K562 (cell line): ENCODE measurements at regions of chr1 and their contacts with region 1.

Region 1: DNA sequence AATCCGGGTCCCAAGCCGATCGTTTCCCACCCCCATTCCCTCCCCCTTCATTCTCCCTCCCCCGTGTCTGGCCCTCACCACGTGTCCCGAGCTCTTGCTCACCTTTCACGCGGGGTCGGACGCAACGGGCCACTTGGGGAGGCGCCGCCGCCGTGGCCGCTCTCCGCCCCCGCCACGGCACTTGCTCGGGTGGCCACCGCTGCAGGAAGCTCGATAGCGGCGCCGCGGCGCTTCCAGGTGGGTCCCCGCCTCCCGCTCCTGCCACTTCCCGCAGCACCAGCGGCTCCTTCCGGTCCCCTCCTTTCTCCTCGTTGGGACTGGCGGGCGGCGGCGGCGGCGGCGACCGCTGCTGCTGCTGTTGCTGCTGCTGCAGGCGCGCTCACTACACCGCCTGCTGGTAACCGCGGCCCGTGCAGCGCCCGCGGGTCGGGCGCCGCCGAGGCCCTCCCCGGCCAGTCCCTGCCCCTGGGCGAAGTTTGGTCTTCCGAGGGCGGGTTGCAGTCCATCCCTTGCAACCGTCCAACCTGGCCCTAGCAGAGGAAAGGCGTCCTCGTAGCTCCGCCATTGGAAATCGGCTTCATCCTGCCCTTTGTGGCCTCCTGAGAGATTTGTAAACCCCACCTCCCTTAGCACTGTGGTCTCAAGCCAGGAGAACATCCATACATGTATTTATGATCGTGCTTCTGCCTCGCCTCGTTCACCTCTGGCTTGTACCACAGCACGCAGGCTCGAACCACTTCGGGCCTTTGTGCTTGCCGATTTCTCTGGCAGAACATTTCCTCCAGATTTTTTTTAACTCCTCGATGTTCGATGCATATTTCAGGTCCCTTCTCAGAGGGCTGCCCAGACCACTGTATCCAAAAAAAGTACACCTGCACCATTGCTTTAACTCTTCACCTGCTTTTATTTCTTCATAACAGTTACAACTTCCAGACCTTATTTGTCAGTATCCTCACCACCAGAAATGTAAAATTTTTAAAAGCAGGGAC is 996 bp upstream of the ZZZ3 start:
- DNase-seq: peak; percentile 88 to 94 (median 90)
- ATAC-seq: peak; percentile 80
- H3K4me3 ChIP-seq: peak overlapping the region; percentile 66
- H3K27ac ChIP-seq: peak overlapping the region; percentile 96
- H3K4me1 ChIP-seq: peaks cover 5 to 7% of the 10 kb centered on the region in 2 experiments
- H3K27me3 ChIP-seq: no peaks in the 10 kb centered on the region
- CTCF ChIP-seq: peak; percentile 83 to 94 (median 85)
- EP300 ChIP-seq: no peak; the same call in 1 of the 2 replicates
- POLR2A ChIP-seq: peak; percentile 83
- RAD21 ChIP-seq: peak; percentile 76 to 80

Region 2: DNA sequence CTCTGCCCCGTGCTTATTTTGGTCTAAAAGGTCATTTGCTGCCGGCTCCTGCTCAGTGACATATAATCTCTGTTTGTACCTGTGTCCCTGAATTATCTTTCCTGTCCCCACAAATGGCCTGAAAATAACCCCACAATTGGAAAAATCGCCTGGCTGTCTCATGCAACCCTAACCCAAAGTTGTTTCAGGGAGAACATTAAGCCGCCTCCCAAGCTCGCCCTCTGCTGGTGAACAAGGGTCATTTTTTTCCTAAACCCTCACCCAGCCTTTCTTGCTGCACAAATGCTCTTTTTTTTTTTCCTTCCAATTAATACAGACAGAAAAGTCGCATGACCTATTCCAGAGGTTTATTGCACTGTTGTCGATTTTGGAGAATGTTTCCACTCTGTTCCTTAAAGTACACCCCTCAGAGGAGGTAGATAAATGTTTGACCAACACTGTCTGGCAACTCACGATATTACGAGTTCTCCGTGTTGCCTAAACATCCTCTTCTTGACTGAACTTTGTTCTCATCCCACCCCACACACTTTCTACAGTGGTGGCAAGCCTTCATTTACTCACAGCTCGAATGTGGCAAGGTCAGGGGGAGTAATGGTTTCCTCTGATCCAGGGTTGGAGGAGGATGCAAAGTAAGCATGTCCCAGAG is 149.7 kb before region 1 on chr1:
- CTCF ChIA-PET with region 1: no interaction called
- POLR2A ChIA-PET with region 1: no interaction called
- in situ Hi-C with region 1: no loop called
- intact Hi-C with region 1: loop called (anchors 5 kb)
- DNase-seq: peak; percentile 68 to 77 (median 73)
- ATAC-seq: peak; percentile 86
- H3K4me3 ChIP-seq: no peak overlapping the region
- H3K27ac ChIP-seq: no peak overlapping the region
- H3K4me1 ChIP-seq: no peaks in the 10 kb centered on the region; a peak in 1 of 5 replicates
- H3K27me3 ChIP-seq: peaks cover 0 to 11% of the 10 kb centered on the region in 2 experiments; a peak in 2 of 5 replicates
- CTCF ChIP-seq: peak; percentile 73 to 80 (median 76)
- EP300 ChIP-seq: no peak
- POLR2A ChIP-seq: no peak
- RAD21 ChIP-seq: peak; percentile 36 to 46; a peak in 3 of 4 replicates

Region 3: GRCh38 chr1:77594366-77595112 is 88.9 kb before region 1 on chr1:
- CTCF ChIA-PET with region 1: no interaction called
- POLR2A ChIA-PET with region 1: no interaction called
- in situ Hi-C with region 1: no loop called
- intact Hi-C with region 1: loop called (anchors 5 kb)
- DNase-seq: no peak
- ATAC-seq: no peak
- H3K4me3 ChIP-seq: no peak overlapping the region
- H3K27ac ChIP-seq: no peak overlapping the region
- H3K4me1 ChIP-seq: no peaks in the 10 kb centered on the region
- H3K27me3 ChIP-seq: no peaks in the 10 kb centered on the region
- CTCF ChIP-seq: no peak
- EP300 ChIP-seq: no peak
- POLR2A ChIP-seq: no peak
- RAD21 ChIP-seq: no peak

Region 4: DNA sequence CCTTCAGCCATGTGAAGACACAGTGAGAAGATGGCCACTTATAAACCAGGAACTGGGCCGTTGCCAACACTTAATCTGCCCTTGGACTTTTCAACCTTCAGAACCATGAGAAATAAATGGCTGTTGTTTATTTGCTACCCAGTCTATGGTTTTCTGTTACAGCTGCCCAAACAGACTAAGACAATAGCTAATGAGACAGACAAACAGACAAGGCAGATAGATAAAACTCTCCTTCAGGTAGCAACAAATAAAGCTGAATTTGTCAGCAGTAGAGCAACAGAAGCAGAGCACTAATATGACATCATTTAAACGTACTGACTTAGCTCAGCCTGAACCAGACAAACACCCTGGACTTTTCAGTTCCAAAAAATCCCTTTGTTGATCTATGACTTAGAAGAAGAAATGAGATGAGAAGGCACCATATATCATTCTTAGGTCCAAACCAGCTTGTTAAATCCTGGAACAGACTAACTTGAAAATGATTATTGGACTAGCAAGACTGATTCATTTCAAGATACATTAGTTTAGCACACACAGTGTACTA is 28.0 kb before region 1 on chr1:
- CTCF ChIA-PET with region 1: no interaction called
- POLR2A ChIA-PET with region 1: no interaction called
- in situ Hi-C with region 1: no loop called
- intact Hi-C with region 1: no loop called
- DNase-seq: no peak
- ATAC-seq: peak; percentile 57; the same call in 2 of the 3 replicates
- H3K4me3 ChIP-seq: no peak overlapping the region
- H3K27ac ChIP-seq: peak overlapping the region; percentile 3; the same call in 1 of the 3 replicates
- H3K4me1 ChIP-seq: no peaks in the 10 kb centered on the region
- H3K27me3 ChIP-seq: no peaks in the 10 kb centered on the region
- CTCF ChIP-seq: no peak
- EP300 ChIP-seq: no peak
- POLR2A ChIP-seq: no peak
- RAD21 ChIP-seq: no peak

Region 5: DNA sequence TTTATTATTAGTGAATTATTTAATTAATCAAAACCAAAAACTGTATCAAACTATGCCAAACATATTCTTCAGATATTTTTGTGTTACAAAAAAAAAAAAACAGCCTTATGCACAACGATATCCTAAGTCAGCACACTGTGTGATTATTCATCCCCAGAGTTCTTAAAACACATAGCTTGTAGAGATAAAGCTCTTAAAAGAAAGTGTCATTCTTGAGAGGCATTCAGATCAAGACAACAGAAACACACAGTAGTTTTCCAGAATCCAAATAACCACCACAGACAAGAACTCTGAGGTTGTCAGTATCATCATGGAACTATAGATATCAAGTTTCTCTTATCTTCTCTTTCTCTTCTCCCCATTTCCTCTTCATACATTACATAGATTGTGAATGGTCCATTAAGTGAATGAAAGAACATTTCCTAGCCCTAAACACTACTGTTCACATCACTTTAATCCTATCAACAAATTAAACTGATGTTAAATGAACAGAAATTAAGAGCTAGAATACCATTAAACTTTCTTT is 14.5 kb before region 1 on chr1:
- CTCF ChIA-PET with region 1: no interaction called
- POLR2A ChIA-PET with region 1: interaction called, 11 read pairs
- in situ Hi-C with region 1: no loop called
- intact Hi-C with region 1: no loop called
- DNase-seq: peak in 1 of 4 experiments; percentile 19
- ATAC-seq: peak; percentile 15
- H3K4me3 ChIP-seq: no peak overlapping the region
- H3K27ac ChIP-seq: peak overlapping the region; percentile 5; the same call in 1 of the 3 replicates
- H3K4me1 ChIP-seq: peaks cover 10 to 21% of the 10 kb centered on the region in 2 experiments
- H3K27me3 ChIP-seq: no peaks in the 10 kb centered on the region
- CTCF ChIP-seq: no peak
- EP300 ChIP-seq: no peak
- POLR2A ChIP-seq: no peak
- RAD21 ChIP-seq: no peak

Region 6: DNA sequence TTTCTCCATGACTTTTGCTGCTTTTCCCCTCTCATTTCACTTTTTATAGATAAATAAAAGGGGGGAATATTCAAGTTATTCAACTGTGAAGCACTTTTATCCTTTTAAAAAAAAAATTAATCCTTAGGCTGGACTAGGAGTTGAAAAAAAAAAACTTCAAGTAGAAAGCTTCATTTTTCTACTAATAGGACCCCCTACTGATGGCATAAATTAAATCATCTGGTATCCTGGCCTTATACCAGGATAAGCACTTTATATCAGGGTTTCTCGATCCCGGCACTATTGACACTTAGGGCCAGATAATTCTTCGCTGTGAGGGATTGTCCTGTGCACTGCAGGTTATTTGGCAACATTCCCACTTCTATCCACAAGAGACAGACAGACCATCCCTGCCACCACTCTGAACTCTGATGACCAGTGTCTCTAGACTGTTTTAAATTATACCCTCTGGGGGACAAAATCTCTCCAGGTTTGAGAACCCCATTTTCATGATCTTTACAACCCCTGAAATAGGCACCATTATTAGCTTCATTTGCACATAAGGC is 58.6 kb after region 1 on chr1:
- CTCF ChIA-PET with region 1: no interaction called
- POLR2A ChIA-PET with region 1: no interaction called
- in situ Hi-C with region 1: no loop called
- intact Hi-C with region 1: no loop called
- DNase-seq: peak in 3 of 4 experiments; percentile 12 to 43 (median 14)
- ATAC-seq: peak; percentile 77
- H3K4me3 ChIP-seq: no peak overlapping the region
- H3K27ac ChIP-seq: no peak overlapping the region
- H3K4me1 ChIP-seq: peaks cover 0 to 7% of the 10 kb centered on the region in 2 experiments; a peak in 2 of 5 replicates
- H3K27me3 ChIP-seq: no peaks in the 10 kb centered on the region
- CTCF ChIP-seq: no peak
- EP300 ChIP-seq: no peak
- POLR2A ChIP-seq: no peak
- RAD21 ChIP-seq: no peak

Region 7: DNA sequence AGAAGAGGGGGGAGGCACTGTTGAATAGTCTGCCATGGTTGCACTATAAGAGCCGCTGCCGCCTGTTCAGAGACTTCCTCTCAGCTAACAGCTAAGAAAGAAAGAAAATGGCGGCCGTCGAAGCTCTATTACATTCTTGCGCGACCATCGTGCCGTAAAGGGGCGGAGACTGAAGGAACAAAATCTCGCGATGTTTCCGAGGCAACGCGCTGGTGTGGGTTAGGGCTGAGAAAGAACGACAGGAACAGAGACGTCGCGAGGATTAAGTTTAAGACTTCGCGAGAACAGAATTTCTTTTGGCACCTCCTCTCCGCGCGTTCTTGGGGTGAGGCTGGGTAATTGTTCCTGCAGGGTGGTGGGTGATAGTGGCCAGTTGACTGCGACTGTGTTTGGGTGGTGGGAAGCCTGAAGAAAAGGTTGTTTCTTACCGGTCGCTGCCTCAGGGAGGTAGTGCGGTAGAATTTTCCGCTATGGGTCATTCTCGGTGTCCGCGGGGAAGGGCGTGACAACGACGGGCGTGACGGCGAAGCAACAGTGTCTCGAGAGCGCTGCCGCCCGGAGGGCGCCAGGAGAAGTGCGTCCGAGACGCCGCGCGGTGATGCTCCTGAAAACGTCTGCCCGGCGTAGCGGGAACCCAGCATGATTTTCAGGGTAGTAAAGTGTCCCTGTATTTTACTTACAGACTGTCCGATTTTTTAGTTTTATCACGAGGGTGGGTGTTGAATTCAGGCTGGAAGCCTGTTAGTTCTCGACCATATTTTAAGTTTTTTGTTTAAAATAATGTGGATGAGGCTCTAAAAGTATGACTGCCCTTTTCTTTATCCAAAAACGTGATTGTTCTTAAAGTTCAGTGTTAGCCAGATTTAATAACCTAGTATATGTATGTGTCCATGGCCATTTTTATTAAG is 295.8 kb after region 1 on chr1 and contains the start of gene FUBP1:
- CTCF ChIA-PET with region 1: no interaction called
- POLR2A ChIA-PET with region 1: no interaction called
- in situ Hi-C with region 1: no loop called
- intact Hi-C with region 1: loop called (anchors 5 kb)
- DNase-seq: peak; percentile 79 to 99 (median 84)
- ATAC-seq: peak; percentile 82
- H3K4me3 ChIP-seq: peak within 1 kb of the TSS; percentile 67
- H3K27ac ChIP-seq: peak within 1 kb of the TSS; percentile 96
- H3K4me1 ChIP-seq: peaks cover 0 to 5% of the 10 kb centered on the region in 2 experiments; a peak in 1 of 5 replicates
- H3K27me3 ChIP-seq: no peaks in the 10 kb centered on the region
- CTCF ChIP-seq: peak; percentile 67 to 83 (median 68)
- EP300 ChIP-seq: 0 out of 2 replicates have a peak, but pooled peaks have one; percentile 17
- POLR2A ChIP-seq: peak; percentile 98
- RAD21 ChIP-seq: peak; percentile 29 to 38; a peak in 3 of 4 replicates
- polyA plus RNA-seq, gene FUBP1: 104 to 170 TPM